ENCODE measurements at regions of chr20 and their contacts with region 1.

Region 1: DNA sequence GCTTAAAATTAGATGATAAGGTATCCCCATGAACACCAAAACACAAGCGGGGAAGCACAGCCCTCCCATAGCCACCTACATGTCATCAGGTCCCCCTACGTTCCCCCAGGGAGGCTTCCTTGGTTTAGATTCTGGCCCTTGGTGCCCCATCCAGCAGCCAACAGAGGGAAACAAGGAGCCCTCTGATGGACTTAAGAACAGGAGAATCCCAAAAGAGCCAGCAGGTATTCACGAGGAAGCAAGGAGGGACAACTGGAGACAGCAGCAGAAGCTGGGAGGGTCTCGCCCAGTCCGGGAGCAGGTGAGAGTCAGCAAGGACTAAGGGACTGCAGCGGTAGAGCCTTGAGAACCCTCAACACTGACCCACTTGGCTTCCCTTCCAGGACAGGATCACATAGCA is 58.4 kb upstream of the TOP1 start:
- DNase-seq: no peak
- ATAC-seq: no peak
- H3K4me3 Mint-ChIP-seq: no peak overlapping the region
- H3K27ac Mint-ChIP-seq: no peak overlapping the region
- H3K4me1 Mint-ChIP-seq: peaks cover 11% of the 10 kb centered on the region
- H3K27me3 Mint-ChIP-seq: peaks cover 8% of the 10 kb centered on the region
- CTCF ChIP-seq: no peak

Region 2: DNA sequence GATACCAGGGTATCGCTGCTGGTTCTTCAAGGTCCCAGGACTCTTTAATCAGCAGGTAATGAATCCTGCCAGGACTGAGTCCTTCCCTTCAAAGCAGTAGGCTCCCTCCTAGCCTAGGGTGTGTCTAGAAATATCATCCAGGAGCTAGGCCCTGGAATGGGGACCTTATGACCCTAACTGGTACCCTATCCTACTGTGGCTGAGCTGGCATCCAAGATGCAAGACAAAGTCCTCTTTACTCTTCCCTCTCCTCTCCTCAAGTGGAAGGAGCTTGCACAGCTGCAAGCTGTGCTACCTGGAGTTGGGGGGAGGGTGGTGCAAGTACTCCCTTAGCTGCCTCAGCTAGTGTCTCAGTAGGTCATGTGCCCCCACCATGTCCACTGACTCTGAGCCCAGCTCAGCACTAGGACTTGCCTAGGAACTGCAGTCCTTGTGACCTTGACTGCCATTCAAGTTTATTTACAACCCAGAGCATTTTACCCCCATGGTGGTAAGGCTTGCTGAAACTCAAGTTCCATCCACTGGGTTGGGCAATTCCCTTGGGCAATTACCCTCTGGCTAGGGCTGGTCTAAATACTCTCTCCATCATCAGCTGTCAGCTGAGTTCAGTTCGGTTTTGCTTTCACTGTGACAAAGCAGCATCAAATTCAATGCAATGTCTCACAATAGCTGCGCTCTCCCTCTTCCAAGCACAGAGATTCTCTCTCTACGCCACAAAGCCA is 10.1 kb after region 1 on chr20:
- CTCF ChIA-PET with region 1: interaction called, 59 read pairs
- POLR2A ChIA-PET with region 1: no interaction called
- intact Hi-C with region 1: no loop called
- DNase-seq: no peak
- ATAC-seq: no peak
- H3K4me3 Mint-ChIP-seq: no peak overlapping the region
- H3K27ac Mint-ChIP-seq: no peak overlapping the region
- H3K4me1 Mint-ChIP-seq: no peaks in the 10 kb centered on the region
- H3K27me3 Mint-ChIP-seq: peaks cover 6% of the 10 kb centered on the region
- CTCF ChIP-seq: no peak

Region 3: DNA sequence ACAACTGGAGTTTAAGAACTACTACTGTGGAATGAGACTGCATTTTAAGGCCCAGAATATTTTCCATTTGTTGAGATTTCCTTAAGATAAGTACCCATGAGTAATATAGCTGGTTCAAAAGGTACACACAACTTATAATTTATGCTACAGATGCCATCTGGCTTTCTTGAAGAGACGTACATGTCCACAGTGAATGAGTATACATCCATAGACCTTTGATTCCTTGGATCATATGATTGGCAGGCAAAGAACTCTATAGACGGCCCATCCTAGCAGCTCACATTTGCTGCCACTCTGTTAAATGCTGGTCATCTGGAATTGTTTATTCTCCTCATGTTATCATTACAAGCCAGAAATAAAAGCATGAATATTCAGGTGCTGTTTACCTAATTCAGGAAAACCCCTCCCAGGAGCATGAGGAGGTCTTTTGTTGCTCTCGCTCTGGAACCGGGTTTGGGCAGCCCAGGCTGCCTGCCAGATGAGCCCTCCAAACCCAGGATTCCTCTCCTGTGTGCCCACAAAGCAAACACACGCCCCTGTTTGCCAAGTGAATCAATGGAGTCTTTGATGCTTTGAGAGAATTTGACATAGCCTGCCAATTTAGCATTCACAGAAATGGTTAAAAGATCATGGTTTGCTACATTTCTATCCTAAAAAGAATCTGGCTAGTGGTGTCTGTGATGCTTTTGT is 149.5 kb after region 1 on chr20:
- CTCF ChIA-PET with region 1: interaction called, 15 read pairs
- POLR2A ChIA-PET with region 1: no interaction called
- intact Hi-C with region 1: no loop called
- DNase-seq: no peak
- ATAC-seq: no peak
- H3K4me3 Mint-ChIP-seq: no peak overlapping the region
- H3K27ac Mint-ChIP-seq: peak overlapping the region; percentile 28
- H3K4me1 Mint-ChIP-seq: peaks cover 4% of the 10 kb centered on the region
- H3K27me3 Mint-ChIP-seq: no peaks in the 10 kb centered on the region
- CTCF ChIP-seq: no peak